AG04449 (cell line): ENCODE measurements at regions of chr3 and their contacts with region 1.

Region 1: DNA sequence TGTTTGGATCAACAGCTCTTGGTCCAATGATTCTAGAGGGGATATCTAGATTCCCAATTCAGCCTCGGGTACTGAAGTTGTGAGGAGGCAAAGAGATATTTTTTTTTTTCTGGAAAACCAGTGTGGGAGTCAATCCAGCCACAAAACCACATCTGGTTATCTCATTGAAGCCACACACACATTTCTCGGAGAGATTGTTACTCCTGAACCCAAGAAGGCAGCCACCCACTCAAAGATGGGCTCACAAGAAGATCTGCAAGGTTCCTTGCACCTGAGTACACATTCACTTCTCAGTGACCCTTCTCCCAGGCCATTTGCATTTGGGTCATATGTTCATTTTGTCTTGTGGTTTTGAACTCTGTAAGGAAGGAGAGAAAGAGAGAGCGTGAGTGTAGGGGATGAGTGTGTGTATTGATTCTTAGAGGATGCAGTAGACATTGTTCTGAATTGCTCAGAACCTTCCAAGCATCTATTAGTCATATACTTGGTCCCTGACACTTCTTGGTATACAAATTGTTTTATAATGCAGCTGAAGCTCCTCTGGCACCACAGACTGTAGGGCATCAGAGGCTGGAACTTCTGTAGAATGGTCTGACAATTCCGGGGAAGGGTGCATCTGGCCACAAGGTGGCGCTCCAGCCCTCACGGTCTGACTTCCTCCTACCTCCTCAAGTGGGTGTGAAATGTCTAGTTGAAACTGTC is 39.3 kb upstream of the TRA2B start:
- DNase-seq: no peak
- H3K4me3 ChIP-seq: no peak overlapping the region
- CTCF ChIP-seq: peak; percentile 96

Region 2: GRCh38 chr3:185959609-185960517 is 17.3 kb before region 1 on chr3:
- CTCF ChIA-PET with region 1: interaction called, 15 read pairs
- POLR2A ChIA-PET with region 1: interaction called, 4 read pairs
- DNase-seq: peak; percentile 41
- H3K4me3 ChIP-seq: no peak overlapping the region
- CTCF ChIP-seq: no peak

Region 3: GRCh38 chr3:186108941-186109865 is 132.1 kb after region 1 on chr3 and contains the start of gene ETV5:
- CTCF ChIA-PET with region 1: no interaction called
- POLR2A ChIA-PET with region 1: no interaction called
- DNase-seq: peak; percentile 99
- H3K4me3 ChIP-seq: peak within 1 kb of the TSS; percentile 86
- CTCF ChIP-seq: no peak

Region 4: GRCh38 chr3:186259612-186260383 is 282.7 kb after region 1 on chr3:
- CTCF ChIA-PET with region 1: interaction called, 24 read pairs
- POLR2A ChIA-PET with region 1: no interaction called
- DNase-seq: peak; percentile 36
- H3K4me3 ChIP-seq: no peak overlapping the region
- CTCF ChIP-seq: peak; percentile 86

Region 5: GRCh38 chr3:186277268-186277909 is 300.3 kb after region 1 on chr3:
- CTCF ChIA-PET with region 1: interaction called, 210 read pairs
- POLR2A ChIA-PET with region 1: no interaction called
- DNase-seq: no peak
- H3K4me3 ChIP-seq: no peak overlapping the region
- CTCF ChIP-seq: peak; percentile 58